Activated CD8-positive, alpha-beta T cell treated with anti-CD3 and anti-CD28 coated beads, Interleukin-2, amount 10 ng/mL, durations not matched to agents 7 days and 5 days (primary cell): ENCODE measurements at regions of chr3 and their contacts with region 1.

Region 1: DNA sequence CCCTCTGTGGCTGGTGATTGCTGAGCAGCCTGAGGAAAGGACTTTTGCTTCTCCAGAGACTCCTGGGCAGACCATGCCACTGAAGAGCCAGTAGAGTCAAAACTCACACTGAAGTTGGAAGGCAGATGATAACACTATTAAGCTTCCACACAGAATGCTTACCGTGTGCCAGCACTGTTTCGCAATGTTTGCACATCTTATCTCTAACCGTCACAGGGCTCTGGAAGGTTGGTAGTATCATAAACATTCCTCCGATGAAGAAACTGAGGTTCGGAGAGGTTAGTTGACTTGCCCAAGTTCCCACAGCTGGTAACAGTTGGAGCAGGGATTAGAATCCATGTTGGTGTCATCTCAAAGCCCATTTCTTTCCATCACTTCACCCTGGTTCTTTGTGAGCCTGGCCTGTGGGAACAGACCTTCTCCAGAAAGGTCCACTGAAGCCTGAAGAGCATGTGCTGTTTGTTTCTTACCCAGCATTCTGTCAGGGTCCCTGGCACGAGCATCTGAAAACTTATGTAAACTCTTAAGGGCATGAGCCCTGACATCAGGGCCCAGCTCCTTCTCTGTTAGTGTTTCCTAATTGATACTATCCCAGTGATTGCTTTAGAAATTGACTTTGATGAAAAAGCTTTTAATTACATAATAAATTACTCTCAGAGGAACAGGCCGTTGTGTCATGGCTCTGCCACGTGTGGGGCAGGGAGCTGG is 77.0 kb upstream of the PRR23C start:
- DNase-seq: peak; percentile 6
- ATAC-seq: no peak
- H3K4me3 Mint-ChIP-seq: no peak overlapping the region
- H3K27ac Mint-ChIP-seq: no peak overlapping the region
- H3K4me1 Mint-ChIP-seq: peaks cover 5% of the 10 kb centered on the region
- H3K27me3 Mint-ChIP-seq: no peaks in the 10 kb centered on the region

Region 2: GRCh38 chr3:139111392-139112229 is 10.1 kb before region 1 on chr3:
- CTCF ChIA-PET with region 1: interaction called, 11 read pairs
- POLR2A ChIA-PET with region 1: no interaction called
- DNase-seq: peak; percentile 75
- ATAC-seq: peak; percentile 66
- H3K4me3 Mint-ChIP-seq: no peak overlapping the region
- H3K27ac Mint-ChIP-seq: no peak overlapping the region
- H3K4me1 Mint-ChIP-seq: peaks cover 15% of the 10 kb centered on the region
- H3K27me3 Mint-ChIP-seq: peaks cover 13% of the 10 kb centered on the region

Region 3: GRCh38 chr3:139281522-139282196 is 160.0 kb after region 1 on chr3:
- CTCF ChIA-PET with region 1: no interaction called
- POLR2A ChIA-PET with region 1: no interaction called
- DNase-seq: no peak
- ATAC-seq: no peak
- H3K4me3 Mint-ChIP-seq: no peak overlapping the region
- H3K27ac Mint-ChIP-seq: no peak overlapping the region
- H3K4me1 Mint-ChIP-seq: peaks cover 7% of the 10 kb centered on the region
- H3K27me3 Mint-ChIP-seq: peaks cover 4% of the 10 kb centered on the region